ENCODE measurements at regions of chr10 and their contacts with region 1.

Region 1: GRCh38 chr10:52740913-52741675 is 31.5 kb downstream of the MBL2 start:
- DNase-seq: no peak
- H3K4me3 ChIP-seq: no peak overlapping the region
- CTCF ChIP-seq: peak; percentile 77

Region 2: GRCh38 chr10:52525761-52526160 is 215.3 kb before region 1 on chr10:
- CTCF ChIA-PET with region 1: no interaction called
- POLR2A ChIA-PET with region 1: no interaction called
- DNase-seq: peak; percentile 42
- H3K4me3 ChIP-seq: no peak overlapping the region
- CTCF ChIP-seq: no peak

Region 3: DNA sequence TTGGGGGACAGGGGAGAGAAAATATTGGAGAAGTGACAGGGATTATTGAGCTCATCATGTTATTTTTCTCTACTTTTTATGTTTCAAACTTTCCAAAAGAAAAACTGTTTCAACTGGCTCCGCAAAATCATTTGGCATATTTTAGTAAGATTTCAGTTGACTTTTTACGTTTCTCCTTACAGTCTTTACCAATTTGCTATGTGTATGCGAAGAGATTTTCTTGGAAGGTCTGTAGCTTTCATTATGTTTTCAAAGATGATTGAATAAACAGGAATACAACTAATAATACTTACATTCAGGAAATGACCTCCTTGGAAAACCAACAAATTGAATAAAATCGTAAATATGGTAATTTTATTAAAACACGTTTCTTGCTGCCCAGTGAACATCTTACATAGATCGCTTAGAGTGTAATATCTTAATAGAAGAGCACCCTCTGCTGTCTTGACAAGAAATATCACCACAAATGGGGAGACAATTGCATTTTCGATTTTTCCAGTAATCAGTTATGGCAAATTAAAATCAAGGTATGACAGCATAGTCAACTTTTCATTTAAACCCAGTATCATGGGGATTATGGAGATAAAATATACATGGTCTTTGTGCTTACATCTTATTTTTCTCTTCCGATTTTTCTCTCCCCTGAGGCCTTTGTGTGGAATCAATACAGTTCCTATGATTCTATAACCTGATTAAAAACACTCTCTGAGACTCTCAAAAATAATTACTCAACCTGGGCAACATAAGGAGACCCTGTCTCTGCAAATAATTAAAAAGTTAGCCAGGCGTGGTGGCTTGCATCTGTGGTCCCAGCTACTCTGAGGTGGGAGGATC is 11.6 kb before region 1 on chr10:
- CTCF ChIA-PET with region 1: interaction called, 21 read pairs
- POLR2A ChIA-PET with region 1: no interaction called
- DNase-seq: no peak
- H3K4me3 ChIP-seq: no peak overlapping the region
- CTCF ChIP-seq: peak; percentile 42

Region 4: GRCh38 chr10:52762088-52762487 is 21.0 kb after region 1 on chr10:
- CTCF ChIA-PET with region 1: interaction called, 44 read pairs
- POLR2A ChIA-PET with region 1: no interaction called
- DNase-seq: no peak
- H3K4me3 ChIP-seq: no peak overlapping the region
- CTCF ChIP-seq: no peak

Region 5: GRCh38 chr10:52779541-52780390 is 38.7 kb after region 1 on chr10:
- CTCF ChIA-PET with region 1: interaction called, 482 read pairs
- POLR2A ChIA-PET with region 1: no interaction called
- DNase-seq: no peak
- H3K4me3 ChIP-seq: no peak overlapping the region
- CTCF ChIP-seq: peak; percentile 90